Activated CD4-positive, alpha-beta memory T cell treated with anti-CD3 and anti-CD28 coated beads for 36 hours (primary cell): ENCODE measurements at regions of chr9 and their contacts with region 1.

Region 1: GRCh38 chr9:135961277-135961705 is at the start of gene UBAC1:
- DNase-seq: peak; percentile 96
- H3K4me3 Mint-ChIP-seq: peak within 1 kb of the TSS; percentile 87
- H3K27ac Mint-ChIP-seq: peak within 1 kb of the TSS; percentile 66
- H3K4me1 Mint-ChIP-seq: peaks cover 35% of the 10 kb centered on the region
- H3K27me3 Mint-ChIP-seq: peaks cover 1% of the 10 kb centered on the region
- total RNA-seq, gene UBAC1: 41.3 to 42.0 TPM

Region 2: DNA sequence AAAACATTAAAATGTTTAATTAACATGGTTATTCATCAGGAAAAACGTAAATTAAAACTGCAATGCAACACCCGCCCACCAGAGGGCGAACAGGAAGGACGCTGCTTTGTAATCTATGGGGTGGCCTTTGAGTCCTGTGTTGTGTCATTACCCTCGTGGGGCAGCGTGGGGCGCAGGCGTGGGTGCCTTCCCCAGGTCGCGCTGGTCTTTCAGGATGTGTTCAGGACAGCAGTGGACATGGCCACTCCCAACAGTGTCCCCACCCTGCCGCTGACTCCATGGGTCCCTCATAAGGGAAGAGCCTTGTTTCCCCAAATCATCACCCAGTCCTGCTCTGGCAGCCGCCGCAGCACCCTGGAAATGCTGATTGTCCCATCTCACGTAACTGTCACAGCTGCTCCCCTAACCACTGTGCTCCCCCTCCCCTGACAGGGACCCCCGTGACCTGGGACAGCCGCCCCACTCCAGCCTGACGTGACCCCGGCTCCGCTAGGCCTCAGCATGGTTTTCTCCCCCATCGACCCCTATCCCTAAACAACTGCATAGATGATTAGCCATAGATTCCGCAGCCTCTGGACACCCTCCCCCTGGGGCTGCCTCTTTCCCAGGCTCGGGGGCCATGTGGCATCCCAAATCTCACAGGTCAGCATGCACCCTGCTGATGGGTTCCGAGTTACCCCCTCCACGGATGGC is 358.4 kb before region 1 on chr9:
- CTCF ChIA-PET with region 1: no interaction called
- POLR2A ChIA-PET with region 1: no interaction called
- intact Hi-C with region 1: loop called (anchors 10 kb)
- DNase-seq: peak; percentile 66
- H3K4me3 Mint-ChIP-seq: no peak overlapping the region
- H3K27ac Mint-ChIP-seq: no peak overlapping the region
- H3K4me1 Mint-ChIP-seq: no peaks in the 10 kb centered on the region
- H3K27me3 Mint-ChIP-seq: peaks cover 12% of the 10 kb centered on the region

Region 3: DNA sequence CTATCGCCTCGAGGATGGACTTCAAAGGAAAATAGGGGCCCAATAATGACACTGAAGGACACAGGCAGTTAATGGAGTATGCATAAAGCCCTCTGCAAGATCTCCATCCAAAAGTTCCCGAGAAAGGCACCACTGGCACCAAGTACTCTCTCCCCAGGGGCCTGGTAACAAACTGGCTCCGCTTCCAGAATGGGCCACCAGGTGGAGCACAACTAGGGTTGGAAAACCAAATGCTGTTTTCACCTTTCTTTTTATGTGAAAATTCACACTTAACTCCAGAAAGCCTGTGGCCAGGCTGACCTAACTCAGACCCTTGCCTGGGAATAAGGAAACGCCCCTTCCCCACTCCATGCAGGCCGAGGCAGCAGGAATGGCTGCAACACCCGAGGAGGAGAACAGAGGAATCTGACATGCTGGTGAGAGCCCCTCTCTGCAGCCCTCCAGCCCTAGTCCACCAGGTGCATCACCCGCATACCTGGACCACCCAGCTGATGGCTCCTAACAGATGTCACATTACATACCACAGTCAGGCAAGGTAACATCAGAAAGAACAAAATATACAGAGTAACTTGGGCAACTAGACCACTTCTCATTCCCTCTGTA is 96.7 kb before region 1 on chr9:
- CTCF ChIA-PET with region 1: interaction called, 10 read pairs
- POLR2A ChIA-PET with region 1: no interaction called
- intact Hi-C with region 1: no loop called
- DNase-seq: peak; percentile 81
- H3K4me3 Mint-ChIP-seq: no peak overlapping the region
- H3K27ac Mint-ChIP-seq: no peak overlapping the region
- H3K4me1 Mint-ChIP-seq: peaks cover 51% of the 10 kb centered on the region
- H3K27me3 Mint-ChIP-seq: no peaks in the 10 kb centered on the region

Region 4: DNA sequence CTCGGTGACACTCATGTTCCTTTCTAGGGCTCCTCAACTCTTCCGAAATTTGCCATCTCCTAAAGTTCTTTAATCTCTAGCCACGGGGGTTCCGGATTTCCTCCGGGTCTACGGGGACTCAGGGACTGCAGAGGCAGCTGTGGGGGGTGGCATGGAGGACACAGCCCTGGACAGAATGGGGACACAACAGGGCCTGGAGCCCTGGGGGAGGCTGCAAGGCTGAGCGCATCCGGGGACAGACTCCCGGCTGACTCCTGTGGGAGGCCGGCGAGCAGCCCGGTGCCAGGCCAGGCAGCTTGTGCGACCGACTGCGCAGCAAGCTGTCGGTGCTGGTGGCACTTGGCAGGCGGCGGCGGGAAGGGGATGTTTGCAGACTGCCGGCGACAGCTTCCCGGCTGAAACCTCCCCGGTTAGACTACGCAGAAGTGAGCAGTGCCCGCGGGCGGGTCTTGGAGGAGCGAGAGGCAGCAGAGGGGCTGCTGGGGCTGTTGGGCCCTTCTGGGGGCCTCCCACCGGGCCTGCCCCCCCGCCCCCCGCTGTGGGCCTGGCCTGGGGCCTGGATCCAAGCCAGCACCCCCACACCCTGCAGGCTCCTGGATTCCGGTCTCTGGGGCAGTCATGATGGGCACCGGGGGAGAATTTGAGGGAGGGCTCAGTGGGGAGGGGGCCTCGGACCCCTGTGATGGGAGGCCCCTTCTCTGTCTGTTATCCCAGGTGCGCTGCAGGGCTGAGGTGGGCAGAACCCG is 28.6 kb after region 1 on chr9:
- CTCF ChIA-PET with region 1: no interaction called
- POLR2A ChIA-PET with region 1: no interaction called
- intact Hi-C with region 1: no loop called
- DNase-seq: peak; percentile 42
- H3K4me3 Mint-ChIP-seq: no peak overlapping the region
- H3K27ac Mint-ChIP-seq: no peak overlapping the region
- H3K4me1 Mint-ChIP-seq: peaks cover 17% of the 10 kb centered on the region
- H3K27me3 Mint-ChIP-seq: no peaks in the 10 kb centered on the region